Activated T-helper 1 cell treated with anti-CD3 and anti-CD28 coated beads, Interleukin-12 subunit alpha, Interleukin-12 subunit beta, Interleukin-2, Interleukin-4 antibody, amounts not matched to agents 30 ng/mL and 10 ng/mL and 1 ng/mL, durations not matched to agents 14 hours and 24 hours and 36 hours (primary cell): ENCODE measurements at regions of chr6 and their contacts with region 1.

Region 1: GRCh38 chr6:135299256-135299655 is 118.1 kb downstream of the MYB start:
- DNase-seq: no peak
- H3K4me3 Mint-ChIP-seq: no peak overlapping the region
- H3K27ac Mint-ChIP-seq: no peak overlapping the region
- H3K4me1 Mint-ChIP-seq: peaks cover 14% of the 10 kb centered on the region
- H3K27me3 Mint-ChIP-seq: no peaks in the 10 kb centered on the region

Region 2: DNA sequence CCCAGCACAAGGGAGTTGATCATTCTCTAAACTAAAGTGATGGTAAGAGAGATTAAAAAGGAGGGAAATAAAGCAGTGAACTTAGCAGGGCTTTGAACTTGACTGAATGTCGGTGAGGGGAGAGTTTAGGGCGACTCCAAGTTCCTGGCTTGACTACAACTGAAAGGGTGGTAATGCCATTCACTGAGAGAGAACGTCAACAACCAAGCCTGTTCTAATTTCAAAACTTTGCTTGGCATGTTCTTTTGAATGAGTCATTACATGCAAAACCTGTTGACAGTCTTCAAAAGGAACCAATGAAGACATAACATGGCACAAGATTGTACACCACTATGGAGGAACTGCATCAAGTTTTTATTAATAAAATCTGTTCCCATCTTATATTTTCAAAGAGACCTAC is 128.4 kb before region 1 on chr6:
- intact Hi-C with region 1: no loop called
- DNase-seq: peak; percentile 16
- H3K4me3 Mint-ChIP-seq: peak overlapping the region; percentile 38
- H3K27ac Mint-ChIP-seq: peak overlapping the region; percentile 75
- H3K4me1 Mint-ChIP-seq: peaks cover 50% of the 10 kb centered on the region
- H3K27me3 Mint-ChIP-seq: no peaks in the 10 kb centered on the region

Region 3: GRCh38 chr6:135212020-135212806 is 87.0 kb before region 1 on chr6:
- intact Hi-C with region 1: loop called (anchors 5 kb)
- DNase-seq: no peak
- H3K4me3 Mint-ChIP-seq: peak overlapping the region; percentile 72
- H3K27ac Mint-ChIP-seq: peak overlapping the region; percentile 90
- H3K4me1 Mint-ChIP-seq: peaks cover 63% of the 10 kb centered on the region
- H3K27me3 Mint-ChIP-seq: no peaks in the 10 kb centered on the region

Region 4: GRCh38 chr6:135382182-135382628 is 82.9 kb after region 1 on chr6:
- intact Hi-C with region 1: loop called (anchors 1 kb)
- DNase-seq: no peak
- H3K4me3 Mint-ChIP-seq: no peak overlapping the region
- H3K27ac Mint-ChIP-seq: peak overlapping the region; percentile 33
- H3K4me1 Mint-ChIP-seq: no peaks in the 10 kb centered on the region
- H3K27me3 Mint-ChIP-seq: no peaks in the 10 kb centered on the region

Region 5: DNA sequence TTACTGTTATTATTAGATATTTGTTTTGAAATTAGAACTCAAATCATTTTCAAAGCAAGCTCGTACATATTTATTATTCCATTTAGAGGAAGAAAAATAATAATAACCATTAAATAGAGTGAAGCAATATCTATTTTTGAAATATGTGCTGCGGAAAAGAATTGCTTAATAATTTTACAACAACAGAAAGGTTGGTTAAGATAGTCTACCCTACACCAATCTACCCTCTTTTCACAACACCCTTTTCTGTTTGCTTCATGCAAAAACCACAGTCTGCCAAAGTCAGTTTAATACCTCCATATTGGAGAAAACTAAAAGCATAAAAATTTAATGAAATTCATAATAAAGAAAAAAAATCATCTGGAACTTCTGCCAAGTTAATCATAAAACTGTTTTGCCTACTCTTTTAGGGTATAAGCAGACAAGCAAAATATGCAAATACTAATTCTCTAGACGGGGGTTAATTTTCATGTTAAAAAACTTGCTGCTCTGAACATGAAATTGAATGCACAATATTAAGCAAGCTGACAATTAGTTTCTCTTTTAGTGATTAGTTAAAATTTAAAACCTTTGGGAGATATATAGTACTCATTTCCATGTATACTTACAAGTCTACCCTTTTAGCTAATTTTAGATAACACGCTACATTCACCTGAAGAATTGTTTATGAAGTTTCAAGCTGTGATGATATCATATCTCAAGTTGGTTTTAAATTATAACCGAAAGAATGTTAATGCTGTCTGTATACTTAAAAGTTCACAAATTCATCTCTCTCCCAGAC is 98.1 kb after region 1 on chr6:
- intact Hi-C with region 1: no loop called
- DNase-seq: no peak
- H3K4me3 Mint-ChIP-seq: no peak overlapping the region
- H3K27ac Mint-ChIP-seq: no peak overlapping the region
- H3K4me1 Mint-ChIP-seq: no peaks in the 10 kb centered on the region
- H3K27me3 Mint-ChIP-seq: peaks cover 3% of the 10 kb centered on the region